B cell (primary cell): ENCODE measurements at regions of chr3 and their contacts with region 1.

Region 1: DNA sequence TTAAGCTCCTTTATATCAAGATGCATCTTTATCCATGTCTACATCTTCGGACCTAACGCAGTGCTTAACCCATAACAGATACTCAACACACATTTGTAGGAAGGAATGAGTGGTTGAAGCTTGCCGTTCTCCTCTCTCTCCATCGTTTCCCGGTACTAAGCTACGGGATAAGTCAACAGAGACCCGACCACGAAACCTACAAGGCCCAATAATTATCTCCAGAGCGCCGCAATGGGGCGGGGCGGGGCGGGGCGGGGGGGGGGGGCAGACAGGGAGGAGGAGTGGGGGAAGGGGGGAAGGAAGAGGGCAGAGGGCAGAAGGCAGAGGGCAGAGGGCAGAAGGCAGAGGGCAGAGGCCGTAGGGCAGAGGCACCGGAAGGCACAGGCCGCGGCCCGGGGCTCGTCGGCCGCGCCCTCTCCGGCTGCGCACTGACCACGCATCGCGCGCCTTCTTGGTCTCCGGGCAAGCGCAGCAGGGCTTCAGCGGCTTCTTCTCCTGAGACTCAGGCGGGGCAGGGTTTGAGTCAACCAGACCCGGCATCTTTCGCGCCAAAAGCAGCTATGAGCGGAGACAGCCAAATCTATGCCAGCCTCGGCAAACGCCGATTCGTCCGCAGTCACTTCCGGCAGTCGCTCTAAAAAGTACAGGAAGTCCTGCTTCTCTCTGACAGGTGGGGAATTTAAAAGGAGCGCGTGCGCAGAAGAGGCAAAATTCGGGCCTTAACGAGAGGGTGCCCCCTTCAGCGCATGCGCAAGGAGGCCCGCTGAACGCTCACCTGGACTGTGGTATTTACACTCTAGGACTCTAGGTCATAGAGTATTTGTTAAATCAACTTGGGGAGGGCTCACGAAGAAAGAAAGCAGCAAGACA is at the start of gene COX17:
- DNase-seq: peak; percentile 99
- ATAC-seq: peak; percentile 83
- H3K4me3 ChIP-seq: peak within 1 kb of the TSS; percentile 68 to 79 (median 74)
- H3K4me3 Mint-ChIP-seq: peak within 1 kb of the TSS; percentile 88
- H3K27ac ChIP-seq: peak within 1 kb of the TSS; percentile 89 to 96
- H3K27ac Mint-ChIP-seq: peak within 1 kb of the TSS; percentile 96
- H3K4me1 ChIP-seq: peaks cover 17% of the 10 kb centered on the region in 2 donors
- H3K4me1 Mint-ChIP-seq: peaks cover 27% of the 10 kb centered on the region
- H3K27me3 ChIP-seq: no peaks in the 10 kb centered on the region
- H3K27me3 Mint-ChIP-seq: no peaks in the 10 kb centered on the region
- CTCF ChIP-seq: no peak
- total RNA-seq, gene COX17: 47.8 and 49.1 TPM in 2 replicates

Region 2: DNA sequence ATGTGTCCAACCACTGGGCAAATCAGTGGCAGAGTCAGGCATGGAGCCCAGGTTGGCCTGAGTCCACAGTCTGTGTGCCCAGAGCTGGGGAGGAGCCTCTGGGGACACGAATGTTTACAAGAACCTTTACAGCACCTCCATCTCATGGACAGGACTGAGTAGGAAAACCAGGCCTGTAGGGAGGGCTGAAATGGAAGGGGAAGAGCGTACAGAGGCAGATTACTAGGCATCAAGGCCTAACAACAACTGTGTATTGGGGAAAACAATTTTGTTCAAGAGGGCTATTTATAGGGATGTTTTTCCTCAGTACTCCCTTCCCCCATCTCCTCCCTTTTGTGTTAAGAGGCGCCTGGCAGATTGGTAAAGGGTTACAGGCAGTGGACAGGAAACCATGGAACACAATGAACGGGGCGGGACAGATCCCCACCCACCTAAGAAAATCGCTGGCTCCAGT is 397.9 kb before region 1 on chr3:
- CTCF ChIA-PET with region 1: interaction called, 41 read pairs
- POLR2A ChIA-PET with region 1: no interaction called
- intact Hi-C with region 1: loop called (anchors 1 kb)
- DNase-seq: no peak
- ATAC-seq: no peak
- H3K4me3 ChIP-seq: no peak overlapping the region
- H3K4me3 Mint-ChIP-seq: no peak overlapping the region
- H3K27ac ChIP-seq: no peak overlapping the region
- H3K27ac Mint-ChIP-seq: no peak overlapping the region
- H3K4me1 ChIP-seq: no peaks in the 10 kb centered on the region
- H3K4me1 Mint-ChIP-seq: no peaks in the 10 kb centered on the region
- H3K27me3 ChIP-seq: no peaks in the 10 kb centered on the region
- H3K27me3 Mint-ChIP-seq: no peaks in the 10 kb centered on the region
- CTCF ChIP-seq: no peak

Region 3: GRCh38 chr3:119469381-119470189 is 207.4 kb before region 1 on chr3:
- CTCF ChIA-PET with region 1: interaction called, 8 read pairs
- POLR2A ChIA-PET with region 1: interaction called, 4 read pairs
- intact Hi-C with region 1: loop called (anchors 1 kb)
- DNase-seq: no peak
- ATAC-seq: peak; percentile 39
- H3K4me3 ChIP-seq: peak overlapping the region; percentile 82 to 98 (median 94)
- H3K4me3 Mint-ChIP-seq: peak overlapping the region; percentile 98
- H3K27ac ChIP-seq: peak overlapping the region; percentile 16 to 74
- H3K27ac Mint-ChIP-seq: peak overlapping the region; percentile 85
- H3K4me1 ChIP-seq: peaks cover 16 to 23% of the 10 kb centered on the region in 2 donors
- H3K4me1 Mint-ChIP-seq: peaks cover 29% of the 10 kb centered on the region
- H3K27me3 ChIP-seq: no peaks in the 10 kb centered on the region
- H3K27me3 Mint-ChIP-seq: no peaks in the 10 kb centered on the region
- CTCF ChIP-seq: no peak

Region 4: DNA sequence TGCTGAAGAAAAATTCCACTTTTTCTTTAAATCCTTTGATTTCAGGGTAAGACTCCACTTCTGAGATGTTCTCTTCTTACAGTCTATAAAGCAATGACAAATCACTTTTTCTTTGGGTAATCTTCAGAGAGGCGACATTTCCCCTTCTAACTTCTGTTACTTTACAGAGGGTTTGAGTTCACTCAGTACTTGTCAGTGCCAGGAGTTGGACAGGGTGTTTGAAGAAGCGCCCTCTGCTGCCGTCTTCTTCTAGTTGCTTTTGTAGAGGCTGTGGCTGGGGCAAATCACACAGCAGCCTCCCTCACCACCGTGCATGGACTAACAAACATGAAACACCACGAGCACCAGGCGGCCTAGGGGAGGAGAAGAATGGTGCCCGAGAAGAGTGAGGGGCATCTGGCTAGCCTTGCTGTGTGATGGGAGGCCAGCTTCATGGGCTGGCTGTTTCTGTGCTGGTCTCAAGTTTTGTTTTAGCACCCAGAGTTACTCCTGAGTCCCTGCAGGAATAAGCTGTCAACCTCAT is 117.5 kb before region 1 on chr3 and contains the start of gene CD80:
- CTCF ChIA-PET with region 1: interaction called, 16 read pairs
- POLR2A ChIA-PET with region 1: no interaction called
- intact Hi-C with region 1: loop called (anchors 1 kb)
- DNase-seq: peak; percentile 85
- ATAC-seq: peak; percentile 60
- H3K4me3 ChIP-seq: peak within 1 kb of the TSS in 4 of 5 experiments; percentile 42 to 71 (median 60)
- H3K4me3 Mint-ChIP-seq: peak within 1 kb of the TSS; percentile 75
- H3K27ac ChIP-seq: peak within 1 kb of the TSS; percentile 71 to 92
- H3K27ac Mint-ChIP-seq: peak within 1 kb of the TSS; percentile 91
- H3K4me1 ChIP-seq: peaks cover 49 to 71% of the 10 kb centered on the region in 2 donors
- H3K4me1 Mint-ChIP-seq: peaks cover 80% of the 10 kb centered on the region
- H3K27me3 ChIP-seq: no peaks in the 10 kb centered on the region
- H3K27me3 Mint-ChIP-seq: no peaks in the 10 kb centered on the region
- CTCF ChIP-seq: peak; percentile 58
- total RNA-seq, gene CD80: 26.5 and 28.0 TPM in 2 replicates

Region 5: DNA sequence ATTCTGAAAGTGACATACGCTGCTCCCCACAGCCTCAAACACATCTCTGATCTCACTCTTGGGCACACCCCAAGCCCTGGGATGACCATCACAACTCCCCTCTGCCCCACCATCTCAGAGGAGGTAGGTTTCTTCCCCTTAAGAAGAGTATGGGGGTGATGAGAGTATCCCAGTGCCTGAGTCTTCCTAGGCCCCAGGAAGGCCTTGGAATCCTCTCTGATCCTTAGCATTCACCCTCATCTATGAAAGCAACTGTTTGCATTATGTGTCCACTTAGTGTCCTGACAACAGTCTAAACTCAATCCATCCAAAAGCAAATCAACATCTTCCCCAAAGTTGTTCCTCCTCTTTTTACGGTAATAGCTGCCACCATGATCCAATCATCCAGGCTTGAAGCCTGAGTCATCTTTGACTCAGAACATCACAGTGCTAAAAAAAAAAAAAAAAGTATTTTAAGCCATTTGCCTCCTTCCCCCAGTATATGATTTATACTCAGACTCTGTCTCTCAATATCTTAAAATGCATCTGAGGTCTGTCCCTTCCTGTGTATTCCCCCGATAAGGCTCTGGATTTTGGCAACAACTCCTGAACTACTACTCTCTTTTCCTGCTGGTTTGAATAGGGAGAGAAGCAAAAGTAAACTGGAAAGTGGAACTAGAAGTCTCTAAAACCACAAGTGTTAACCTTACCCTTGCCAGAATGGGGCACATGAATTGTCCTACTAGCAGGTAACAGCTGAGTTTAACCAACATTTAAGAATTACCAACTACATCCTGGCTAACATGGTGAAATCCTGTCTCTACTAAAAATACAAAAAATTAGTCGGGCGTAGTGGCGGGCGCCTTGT is 39.1 kb before region 1 on chr3:
- CTCF ChIA-PET with region 1: interaction called, 6 read pairs
- POLR2A ChIA-PET with region 1: no interaction called
- intact Hi-C with region 1: loop called (anchors 1 kb)
- DNase-seq: peak; percentile 65
- ATAC-seq: peak; percentile 60
- H3K4me3 ChIP-seq: peak overlapping the region in 2 of 5 experiments; percentile 29 to 30
- H3K4me3 Mint-ChIP-seq: peak overlapping the region; percentile 85
- H3K27ac ChIP-seq: peak overlapping the region in 1 of 2 donors; percentile 65
- H3K27ac Mint-ChIP-seq: peak overlapping the region; percentile 97
- H3K4me1 ChIP-seq: peaks cover 16 to 20% of the 10 kb centered on the region in 2 donors
- H3K4me1 Mint-ChIP-seq: peaks cover 24% of the 10 kb centered on the region
- H3K27me3 ChIP-seq: no peaks in the 10 kb centered on the region
- H3K27me3 Mint-ChIP-seq: no peaks in the 10 kb centered on the region
- CTCF ChIP-seq: no peak

Region 6: GRCh38 chr3:120348981-120349818 is 672.2 kb after region 1 on chr3 and contains the start of gene LRRC58:
- CTCF ChIA-PET with region 1: no interaction called
- POLR2A ChIA-PET with region 1: no interaction called
- intact Hi-C with region 1: loop called (anchors 10 kb)
- DNase-seq: peak; percentile 95
- ATAC-seq: peak; percentile 89
- H3K4me3 ChIP-seq: peak within 1 kb of the TSS; percentile 61 to 99 (median 88)
- H3K4me3 Mint-ChIP-seq: peak within 1 kb of the TSS; percentile 95
- H3K27ac ChIP-seq: peak within 1 kb of the TSS; percentile 63 to 85
- H3K27ac Mint-ChIP-seq: peak within 1 kb of the TSS; percentile 94
- H3K4me1 ChIP-seq: peaks cover 14 to 17% of the 10 kb centered on the region in 2 donors
- H3K4me1 Mint-ChIP-seq: peaks cover 41% of the 10 kb centered on the region
- H3K27me3 ChIP-seq: peaks cover 0 to 10% (median 0%) of the 10 kb centered on the region in 4 experiments
- H3K27me3 Mint-ChIP-seq: no peaks in the 10 kb centered on the region
- CTCF ChIP-seq: peak; percentile 25
- total RNA-seq, gene LRRC58: 16.7 TPM in 2 replicates

Region 7: GRCh38 chr3:120417272-120417911 is 740.4 kb after region 1 on chr3:
- CTCF ChIA-PET with region 1: no interaction called
- POLR2A ChIA-PET with region 1: no interaction called
- intact Hi-C with region 1: no loop called
- DNase-seq: peak; percentile 92
- ATAC-seq: peak; percentile 100
- H3K4me3 ChIP-seq: peak overlapping the region; percentile 39 to 76 (median 54)
- H3K4me3 Mint-ChIP-seq: peak overlapping the region; percentile 82
- H3K27ac ChIP-seq: no peak overlapping the region
- H3K27ac Mint-ChIP-seq: peak overlapping the region; percentile 2
- H3K4me1 ChIP-seq: peaks cover 7 to 14% of the 10 kb centered on the region in 2 donors
- H3K4me1 Mint-ChIP-seq: peaks cover 21% of the 10 kb centered on the region
- H3K27me3 ChIP-seq: no peaks in the 10 kb centered on the region
- H3K27me3 Mint-ChIP-seq: no peaks in the 10 kb centered on the region
- CTCF ChIP-seq: peak; percentile 86